ENCODE measurements at regions of chr12 and their contacts with region 1.

Region 1: DNA sequence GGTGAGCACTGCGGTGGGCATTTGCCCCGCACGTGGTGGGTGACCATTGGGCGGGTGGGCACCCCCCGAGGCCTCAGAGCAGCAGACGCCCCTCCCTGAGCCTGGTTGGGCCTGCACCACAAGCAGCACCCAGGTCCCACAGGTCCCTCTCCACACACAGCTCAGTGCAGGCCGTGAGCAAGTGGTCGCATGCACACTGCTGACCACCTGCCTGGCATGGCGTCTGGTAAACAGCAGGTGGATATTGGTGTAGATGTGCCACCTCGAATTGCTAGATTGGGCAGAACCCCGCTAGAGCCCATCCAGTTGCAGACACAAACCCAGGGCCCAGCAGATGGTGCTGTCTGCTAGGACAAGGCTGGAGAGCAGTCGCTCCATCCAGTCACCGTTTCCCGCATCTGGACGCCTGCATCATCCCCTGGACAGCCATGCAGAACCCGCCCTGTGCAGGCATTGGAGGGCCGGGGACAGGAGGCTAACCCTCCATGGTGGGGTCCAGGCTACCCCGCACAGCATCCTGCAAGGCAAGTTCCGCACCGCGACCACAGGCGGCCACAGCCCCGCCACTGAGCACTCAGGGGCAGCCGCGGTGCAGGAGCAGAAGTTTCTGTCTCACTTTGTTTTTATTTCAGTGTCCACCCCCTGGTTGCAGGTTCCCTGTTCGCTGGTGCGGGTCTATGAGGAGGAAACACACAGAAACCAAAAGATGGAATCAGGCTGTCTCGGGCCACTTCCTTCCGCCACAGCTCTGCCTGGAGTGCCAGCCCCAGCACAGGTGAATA is 45.6 kb upstream of the RIMBP2 start:
- DNase-seq: peak; percentile 76
- ATAC-seq: peak; percentile 49
- H3K4me3 Mint-ChIP-seq: peak overlapping the region; percentile 9
- H3K27ac Mint-ChIP-seq: no peak overlapping the region
- H3K4me1 Mint-ChIP-seq: peaks cover 7% of the 10 kb centered on the region
- H3K27me3 Mint-ChIP-seq: peaks cover 3% of the 10 kb centered on the region
- CTCF ChIP-seq: peak; percentile 68

Region 2: GRCh38 chr12:130818635-130819576 is 57.2 kb after region 1 on chr12:
- CTCF ChIA-PET with region 1: interaction called, 20 read pairs
- POLR2A ChIA-PET with region 1: no interaction called
- intact Hi-C with region 1: loop called (anchors 2 kb)
- DNase-seq: peak; percentile 81
- ATAC-seq: peak; percentile 94
- H3K4me3 Mint-ChIP-seq: peak overlapping the region; percentile 74
- H3K27ac Mint-ChIP-seq: no peak overlapping the region
- H3K4me1 Mint-ChIP-seq: peaks cover 9% of the 10 kb centered on the region
- H3K27me3 Mint-ChIP-seq: no peaks in the 10 kb centered on the region
- CTCF ChIP-seq: peak; percentile 98

Measured in activated CD8-positive, alpha-beta T cell treated with anti-CD3 and anti-CD28 coated beads for 36 hours (primary cell).